Motor neuron (in vitro differentiated cells): ENCODE measurements at regions of chr3 and their contacts with region 1.

Region 1: GRCh38 chr3:46895204-46895660 is 17.7 kb downstream of the PTH1R start:
- ATAC-seq: peak in 3 of 8 experiments; percentile 14 to 62 (median 29)
- H3K4me3 ChIP-seq: no peak overlapping the region
- H3K27ac ChIP-seq: no peak overlapping the region
- H3K4me1 ChIP-seq: peaks cover 11 to 14% of the 10 kb centered on the region in 2 donors

Region 2: GRCh38 chr3:46663591-46664135 is 231.6 kb before region 1 on chr3:
- in situ Hi-C with region 1: no loop called
- ATAC-seq: peak in 7 of 8 experiments; percentile 7 to 83 (median 81)
- H3K4me3 ChIP-seq: no peak overlapping the region
- H3K27ac ChIP-seq: peak overlapping the region; percentile 72 to 78
- H3K4me1 ChIP-seq: peaks cover 53 to 65% of the 10 kb centered on the region in 2 donors

Region 3: GRCh38 chr3:46695177-46695961 is 199.9 kb before region 1 on chr3:
- in situ Hi-C with region 1: loop called in 8 of 9 experiments (anchors 10 to 25 kb)
- ATAC-seq: peak in 1 of 8 experiments; percentile 18
- H3K4me3 ChIP-seq: no peak overlapping the region
- H3K27ac ChIP-seq: no peak overlapping the region
- H3K4me1 ChIP-seq: peaks cover 20 to 28% of the 10 kb centered on the region in 2 donors